ENCODE measurements at regions of chr4 and their contacts with region 1.

Region 1: DNA sequence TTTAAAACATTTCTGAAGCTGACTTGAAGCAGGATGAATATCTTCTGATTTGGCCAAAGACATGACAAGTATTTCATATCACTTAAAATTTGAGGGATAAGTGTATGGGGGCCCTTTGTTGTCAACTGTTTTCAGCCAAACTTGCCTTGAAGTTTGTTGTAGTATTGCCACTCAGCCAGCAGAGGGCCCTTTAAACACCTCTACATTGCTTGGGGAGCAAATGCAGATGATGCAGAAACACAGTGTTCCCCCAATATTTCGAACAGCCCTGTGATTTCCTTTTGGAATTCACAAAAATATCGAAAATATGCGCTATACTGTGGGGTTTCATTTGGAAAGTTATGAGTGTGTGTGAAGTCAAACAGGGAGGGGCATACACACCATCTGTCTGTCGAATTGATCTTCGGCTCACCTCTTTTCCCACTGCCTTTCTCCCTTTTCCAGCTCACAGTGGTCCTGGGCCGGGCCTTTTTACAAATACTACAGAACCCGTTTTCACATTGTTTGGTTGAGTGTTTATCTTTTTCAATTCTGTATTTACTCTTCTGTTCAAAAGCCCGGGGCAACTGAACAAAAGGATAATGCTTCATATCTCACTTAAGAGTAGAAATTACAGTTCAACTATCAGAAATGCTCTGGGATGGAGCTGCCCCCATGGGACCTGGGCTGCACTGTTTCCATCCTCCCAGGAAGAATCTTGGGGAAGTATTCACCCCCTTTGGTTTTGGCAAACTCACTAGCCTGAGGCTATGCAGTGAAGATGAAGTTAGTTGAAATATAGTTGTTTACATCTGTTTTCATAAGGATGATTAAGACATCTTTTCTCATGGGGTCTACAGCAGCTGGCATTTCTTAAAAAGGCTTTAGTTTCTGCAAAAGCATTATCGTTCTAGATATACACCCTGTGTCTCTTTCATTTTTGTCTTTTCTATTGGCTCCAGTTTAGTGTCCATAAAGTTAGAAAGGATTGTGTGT is 137.6 kb downstream of the EGF start:
- DNase-seq: peak in 1 of 2 experiments; percentile 63
- H3K4me3 ChIP-seq: no peak overlapping the region
- H3K27ac ChIP-seq: no peak overlapping the region
- H3K4me1 ChIP-seq: no peaks in the 10 kb centered on the region
- H3K27me3 ChIP-seq: no peaks in the 10 kb centered on the region
- CTCF ChIP-seq: peak in 2 of 3 experiments; percentile 58 to 78; a peak in 3 of 4 replicates
- EP300 ChIP-seq: no peak
- POLR2A ChIP-seq: no peak
- RAD21 ChIP-seq: peak; percentile 70 to 73

Region 2: GRCh38 chr4:109826719-109827118 is 223.5 kb before region 1 on chr4:
- CTCF ChIA-PET with region 1: no interaction called
- POLR2A ChIA-PET with region 1: no interaction called
- DNase-seq: no peak
- H3K4me3 ChIP-seq: no peak overlapping the region
- H3K27ac ChIP-seq: no peak overlapping the region
- H3K4me1 ChIP-seq: no peaks in the 10 kb centered on the region
- H3K27me3 ChIP-seq: no peaks in the 10 kb centered on the region
- CTCF ChIP-seq: peak in 1 of 3 experiments; percentile 20; a peak in 2 of 4 replicates
- EP300 ChIP-seq: no peak
- POLR2A ChIP-seq: no peak
- RAD21 ChIP-seq: peak in 1 of 2 experiments; percentile 35

Region 3: DNA sequence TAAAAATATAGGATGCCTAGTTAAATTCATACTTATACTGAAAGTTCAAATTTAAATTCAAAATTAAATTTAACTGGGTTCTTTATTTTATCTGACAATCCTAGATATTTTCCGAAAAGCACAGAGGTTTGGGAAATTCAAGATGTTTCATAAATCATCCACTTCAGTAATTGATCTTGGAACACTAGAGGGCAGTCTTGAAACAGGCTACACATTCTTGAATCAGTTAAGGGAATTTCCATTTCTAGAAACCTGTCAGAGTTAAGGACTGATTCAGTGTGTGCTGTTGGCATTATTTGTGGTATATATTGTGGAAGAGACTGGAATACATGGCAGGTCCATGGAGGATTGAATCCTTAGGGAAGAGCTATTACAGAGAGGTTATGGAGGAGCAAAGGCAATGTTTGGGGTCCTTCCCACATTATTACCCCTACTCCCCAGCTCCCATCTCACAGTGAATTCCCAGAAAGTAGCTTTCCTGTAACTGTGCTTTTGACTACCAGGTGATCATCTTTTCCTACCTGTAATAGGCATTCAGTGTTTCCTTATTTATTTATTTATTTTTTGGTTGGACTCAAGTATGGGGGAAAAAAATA is 44.7 kb before region 1 on chr4:
- CTCF ChIA-PET with region 1: interaction called, 12 read pairs
- POLR2A ChIA-PET with region 1: no interaction called
- DNase-seq: no peak
- H3K4me3 ChIP-seq: no peak overlapping the region
- H3K27ac ChIP-seq: no peak overlapping the region
- H3K4me1 ChIP-seq: 0 out of 7 replicates have a peak, but pooled peaks cover 0 to 2% (median 0%) of the 10 kb centered on the region in 4 experiments
- H3K27me3 ChIP-seq: no peaks in the 10 kb centered on the region
- CTCF ChIP-seq: peak in 2 of 3 experiments; percentile 59 to 69; a peak in 2 of 4 replicates
- EP300 ChIP-seq: no peak
- POLR2A ChIP-seq: no peak
- RAD21 ChIP-seq: peak; percentile 88

Region 4: DNA sequence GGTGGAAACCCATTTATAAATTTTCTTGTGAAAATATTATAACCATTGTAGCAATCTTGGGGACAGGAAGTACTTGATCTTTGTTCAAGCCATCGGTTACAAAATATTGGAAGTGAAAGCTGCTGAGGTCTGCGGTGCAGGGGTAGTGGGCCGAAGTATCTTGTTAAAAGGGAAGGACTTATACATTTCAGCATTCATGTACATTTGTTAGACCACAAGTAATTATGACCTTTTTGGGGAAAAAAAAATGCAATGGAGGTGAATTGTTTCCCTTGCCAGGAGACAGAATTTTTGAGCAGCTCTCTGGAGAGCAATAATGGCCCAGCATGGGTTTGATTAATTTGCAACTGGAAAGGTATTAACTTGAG is 16.2 kb before region 1 on chr4:
- CTCF ChIA-PET with region 1: interaction called, 17 read pairs
- POLR2A ChIA-PET with region 1: interaction called, 4 read pairs
- DNase-seq: no peak
- H3K4me3 ChIP-seq: no peak overlapping the region
- H3K27ac ChIP-seq: no peak overlapping the region
- H3K4me1 ChIP-seq: no peaks in the 10 kb centered on the region
- H3K27me3 ChIP-seq: no peaks in the 10 kb centered on the region
- CTCF ChIP-seq: no peak
- EP300 ChIP-seq: no peak
- POLR2A ChIP-seq: no peak
- RAD21 ChIP-seq: no peak

Region 5: GRCh38 chr4:110096405-110096804 is 46.2 kb after region 1 on chr4:
- CTCF ChIA-PET with region 1: interaction called, 12 read pairs
- POLR2A ChIA-PET with region 1: no interaction called
- DNase-seq: no peak
- H3K4me3 ChIP-seq: no peak overlapping the region
- H3K27ac ChIP-seq: no peak overlapping the region
- H3K4me1 ChIP-seq: no peaks in the 10 kb centered on the region
- H3K27me3 ChIP-seq: no peaks in the 10 kb centered on the region
- CTCF ChIP-seq: no peak
- EP300 ChIP-seq: no peak
- POLR2A ChIP-seq: no peak
- RAD21 ChIP-seq: no peak

Region 6: DNA sequence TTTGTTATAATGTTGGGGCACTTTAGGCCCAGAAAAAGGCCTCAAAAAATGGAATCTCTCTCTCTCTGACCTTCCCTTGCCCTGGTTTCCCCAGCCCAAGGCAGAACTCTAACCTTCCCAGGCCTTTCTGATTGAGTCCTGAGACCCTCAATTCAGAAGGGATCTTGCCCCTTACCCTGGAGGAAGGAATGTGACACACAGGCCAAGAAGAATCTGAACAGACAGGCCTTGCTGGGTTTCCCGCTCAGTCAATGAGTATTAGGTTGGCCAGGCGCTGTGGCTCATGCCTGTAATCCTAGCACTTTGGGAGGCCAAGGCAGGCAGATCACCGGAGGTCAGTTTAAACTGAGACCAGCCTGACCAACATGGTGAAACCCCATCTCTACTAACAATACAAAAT is 120.6 kb after region 1 on chr4:
- CTCF ChIA-PET with region 1: interaction called, 14 read pairs
- POLR2A ChIA-PET with region 1: no interaction called
- DNase-seq: no peak
- H3K4me3 ChIP-seq: no peak overlapping the region
- H3K27ac ChIP-seq: no peak overlapping the region
- H3K4me1 ChIP-seq: peaks cover 0 to 1% (median under 1%) of the 10 kb centered on the region in 4 experiments; a peak in 2 of 7 replicates
- H3K27me3 ChIP-seq: no peaks in the 10 kb centered on the region
- CTCF ChIP-seq: peak; percentile 3 to 36 (median 17); a peak in 3 of 4 replicates
- EP300 ChIP-seq: no peak
- POLR2A ChIP-seq: no peak
- RAD21 ChIP-seq: peak in 1 of 2 experiments; percentile 24; a peak in 1 of 4 replicates

Region 7: DNA sequence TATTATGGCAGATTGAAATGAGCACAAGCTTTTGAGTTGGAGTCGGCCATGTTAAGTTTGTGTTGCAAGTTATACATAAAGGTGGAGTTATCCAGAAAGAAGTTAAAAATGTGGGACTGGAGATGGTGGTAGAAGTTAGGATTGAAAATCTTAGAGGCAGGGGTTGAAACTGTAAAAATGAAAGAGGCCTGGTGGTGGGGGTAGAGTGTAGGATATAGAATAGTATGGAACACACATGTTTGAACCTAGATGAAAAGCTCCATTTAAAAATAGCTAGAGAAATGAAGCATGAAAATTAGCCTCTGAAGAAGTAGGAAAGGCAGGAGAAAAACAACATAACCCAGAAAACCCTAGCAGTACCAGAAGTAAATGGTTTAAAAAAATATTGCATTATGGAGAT is 293.9 kb after region 1 on chr4:
- CTCF ChIA-PET with region 1: interaction called, 10 read pairs
- POLR2A ChIA-PET with region 1: no interaction called
- DNase-seq: no peak
- H3K4me3 ChIP-seq: no peak overlapping the region
- H3K27ac ChIP-seq: no peak overlapping the region
- H3K4me1 ChIP-seq: peaks cover 0 to 2% (median under 1%) of the 10 kb centered on the region in 4 experiments; a peak in 1 of 7 replicates
- H3K27me3 ChIP-seq: no peaks in the 10 kb centered on the region
- CTCF ChIP-seq: peak in 2 of 3 experiments; percentile 26 to 62; a peak in 2 of 4 replicates
- EP300 ChIP-seq: no peak
- POLR2A ChIP-seq: no peak
- RAD21 ChIP-seq: peak; percentile 80 to 83

Region 8: DNA sequence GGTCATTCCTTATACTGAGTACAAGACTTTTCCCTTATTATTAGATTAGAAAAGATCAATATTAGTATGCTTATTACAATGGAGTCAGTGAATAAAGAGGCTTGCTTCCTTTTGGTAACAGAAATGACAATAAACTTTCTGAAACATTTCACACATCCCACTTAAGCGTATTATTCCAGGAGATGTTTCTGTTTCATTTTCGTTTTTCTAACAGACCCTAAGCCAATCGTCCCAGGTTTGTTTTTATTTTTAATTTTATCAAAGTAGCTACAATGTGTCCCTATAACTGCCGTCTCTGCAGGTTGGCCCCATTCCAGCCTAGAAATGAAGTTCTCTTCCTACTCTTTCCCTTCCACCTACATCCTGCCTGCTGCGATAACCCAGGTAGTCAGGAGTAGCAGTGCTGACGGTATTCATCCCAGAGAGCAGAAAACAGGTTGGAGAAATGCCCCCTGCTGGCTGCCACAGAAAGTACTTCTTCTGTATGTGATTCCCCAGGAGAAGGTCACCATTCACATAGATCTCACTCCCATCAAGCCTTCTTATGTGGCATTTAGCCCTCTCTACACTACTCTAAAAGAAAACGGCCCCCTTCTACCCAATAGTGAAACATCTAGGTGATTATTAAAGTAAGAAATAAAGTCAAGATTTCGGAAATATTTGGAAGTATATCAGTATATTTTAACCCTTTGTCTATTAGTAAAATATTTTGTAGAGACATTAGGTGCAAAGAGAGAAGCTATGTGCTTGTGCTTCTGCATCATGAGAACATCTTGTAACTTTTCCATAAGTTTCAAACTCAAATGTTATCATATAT is 466.1 kb after region 1 on chr4:
- CTCF ChIA-PET with region 1: interaction called, 11 read pairs
- POLR2A ChIA-PET with region 1: no interaction called
- DNase-seq: peak; percentile 50 to 80
- H3K4me3 ChIP-seq: no peak overlapping the region
- H3K27ac ChIP-seq: no peak overlapping the region
- H3K4me1 ChIP-seq: no peaks in the 10 kb centered on the region
- H3K27me3 ChIP-seq: no peaks in the 10 kb centered on the region
- CTCF ChIP-seq: peak; percentile 49 to 84 (median 76)
- EP300 ChIP-seq: no peak
- POLR2A ChIP-seq: no peak
- RAD21 ChIP-seq: peak; percentile 70 to 72